ENCODE measurements at regions of chr12 and their contacts with region 1.

Region 1: GRCh38 chr12:120367233-120367923 is 1.6 kb downstream of the MSI1 start:
- DNase-seq: no peak
- H3K4me3 ChIP-seq: no peak overlapping the region
- H3K27ac ChIP-seq: no peak overlapping the region
- H3K4me1 ChIP-seq: no peaks in the 10 kb centered on the region
- H3K27me3 ChIP-seq: peaks cover 33% of the 10 kb centered on the region
- CTCF ChIP-seq: peak; percentile 11 to 28

Region 2: GRCh38 chr12:120012067-120012621 is 355.2 kb before region 1 on chr12:
- CTCF ChIA-PET with region 1: no interaction called
- dilution Hi-C with region 1: no loop called
- in situ Hi-C with region 1: no loop called
- intact Hi-C with region 1: no loop called
- DNase-seq: peak; percentile 34
- H3K4me3 ChIP-seq: no peak overlapping the region
- H3K27ac ChIP-seq: no peak overlapping the region
- H3K4me1 ChIP-seq: peaks cover 7% of the 10 kb centered on the region
- H3K27me3 ChIP-seq: no peaks in the 10 kb centered on the region
- CTCF ChIP-seq: no peak

Region 3: GRCh38 chr12:120301962-120302815 is 65.2 kb before region 1 on chr12 and contains the start of gene SIRT4:
- CTCF ChIA-PET with region 1: no interaction called
- dilution Hi-C with region 1: loop called (anchors 5 kb)
- in situ Hi-C with region 1: no loop called
- intact Hi-C with region 1: no loop called
- DNase-seq: peak; percentile 90
- H3K4me3 ChIP-seq: peak within 1 kb of the TSS; percentile 57 to 77 (median 63)
- H3K27ac ChIP-seq: peak within 1 kb of the TSS; percentile 41
- H3K4me1 ChIP-seq: no peaks in the 10 kb centered on the region
- H3K27me3 ChIP-seq: no peaks in the 10 kb centered on the region
- CTCF ChIP-seq: peak; percentile 79 to 84
- total RNA-seq, gene SIRT4: 0.42 to 0.83 TPM

Region 4: GRCh38 chr12:120437754-120438494 is 70.5 kb after region 1 on chr12 and contains the start of gene COX6A1:
- CTCF ChIA-PET with region 1: interaction called, 6 read pairs
- dilution Hi-C with region 1: loop called (anchors 5 kb)
- in situ Hi-C with region 1: no loop called
- intact Hi-C with region 1: no loop called
- DNase-seq: peak; percentile 98
- H3K4me3 ChIP-seq: peak within 1 kb of the TSS; percentile 47 to 99 (median 82)
- H3K27ac ChIP-seq: peak within 1 kb of the TSS; percentile 61
- H3K4me1 ChIP-seq: peaks cover 14% of the 10 kb centered on the region
- H3K27me3 ChIP-seq: no peaks in the 10 kb centered on the region
- CTCF ChIP-seq: peak in 1 of 2 donors; percentile 21
- total RNA-seq, gene COX6A1: 306 to 422 TPM

Region 5: DNA sequence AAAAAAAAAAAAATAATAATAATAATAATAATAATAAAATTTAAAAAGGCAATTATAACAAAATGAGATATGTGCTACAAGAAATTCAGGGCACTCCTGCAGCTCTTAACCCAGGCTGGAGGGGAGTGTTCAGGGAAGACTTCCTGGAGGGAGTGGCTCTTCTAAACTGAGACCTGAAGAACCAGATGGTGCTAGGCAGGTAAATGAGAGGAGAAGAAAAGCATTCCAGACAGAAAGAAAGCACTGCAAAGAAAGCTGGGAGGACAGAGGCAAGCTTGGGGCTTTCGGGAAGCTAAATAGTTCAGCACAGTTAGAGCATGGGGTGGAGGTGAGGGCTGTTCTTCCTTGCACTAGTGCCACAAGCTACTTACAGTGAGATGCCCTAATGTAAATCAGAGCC is 112.1 kb after region 1 on chr12:
- CTCF ChIA-PET with region 1: no interaction called
- dilution Hi-C with region 1: loop called (anchors 5 kb)
- in situ Hi-C with region 1: no loop called
- intact Hi-C with region 1: no loop called
- DNase-seq: no peak
- H3K4me3 ChIP-seq: no peak overlapping the region
- H3K27ac ChIP-seq: no peak overlapping the region
- H3K4me1 ChIP-seq: peaks cover 14% of the 10 kb centered on the region
- H3K27me3 ChIP-seq: no peaks in the 10 kb centered on the region
- CTCF ChIP-seq: no peak

Region 6: GRCh38 chr12:121657305-121658008 is 1290.1 kb after region 1 on chr12:
- CTCF ChIA-PET with region 1: interaction called, 10 read pairs
- dilution Hi-C with region 1: no loop called
- in situ Hi-C with region 1: no loop called
- intact Hi-C with region 1: no loop called
- DNase-seq: no peak
- H3K4me3 ChIP-seq: no peak overlapping the region
- H3K27ac ChIP-seq: no peak overlapping the region
- H3K4me1 ChIP-seq: peaks cover 4% of the 10 kb centered on the region
- H3K27me3 ChIP-seq: no peaks in the 10 kb centered on the region
- CTCF ChIP-seq: no peak